ENCODE measurements at regions of chr19 and their contacts with region 1.

Region 1: GRCh38 chr19:40750059-40750873 is at the start of gene ACTMAP:
- DNase-seq: peak; percentile 100
- total RNA-seq, gene ACTMAP: 9.2 TPM

Region 2: GRCh38 chr19:40690693-40691420 is 59.4 kb before region 1 on chr19:
- intact Hi-C with region 1: loop called (anchors 2 kb)
- DNase-seq: peak; percentile 97

Region 3: DNA sequence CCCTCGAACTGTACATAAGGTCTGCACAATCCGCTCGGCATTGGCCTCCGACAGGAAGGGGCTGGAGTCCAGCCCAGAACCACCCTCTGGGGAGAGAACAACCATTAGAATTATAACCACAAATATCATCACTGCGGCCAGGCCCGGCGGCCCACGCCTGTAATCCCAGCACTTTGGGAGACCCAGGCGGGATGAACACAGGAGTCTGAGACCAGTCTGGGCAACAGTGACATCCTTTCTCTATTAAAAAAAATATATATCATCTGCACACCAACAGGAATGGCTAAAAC is 45.0 kb before region 1 on chr19:
- intact Hi-C with region 1: no loop called
- DNase-seq: no peak

Region 4: GRCh38 chr19:40739871-40740703 is 10.2 kb before region 1 on chr19:
- intact Hi-C with region 1: no loop called
- DNase-seq: no peak

Region 5: GRCh38 chr19:40777937-40778705 is 27.9 kb after region 1 on chr19 and contains the start of gene RAB4B:
- intact Hi-C with region 1: loop called (anchors 2 kb)
- DNase-seq: peak; percentile 100
- total RNA-seq, gene RAB4B: 16.9 TPM

Measured in cardiac septum (tissue), 1 donor.